SK-N-SH (cell line): ENCODE measurements at regions of chr1 and their contacts with region 1.

Region 1: GRCh38 chr1:211698161-211699026 is 23.0 kb upstream of the NEK2 start:
- DNase-seq: peak; percentile 86
- H3K4me3 ChIP-seq: no peak overlapping the region; a peak in 1 of 4 replicates
- H3K27ac ChIP-seq: no peak overlapping the region
- H3K4me1 ChIP-seq: no peaks in the 10 kb centered on the region
- H3K27me3 ChIP-seq: no peaks in the 10 kb centered on the region
- CTCF ChIP-seq: peak; percentile 95
- EP300 ChIP-seq: no peak
- RAD21 ChIP-seq: peak; percentile 89

Region 2: DNA sequence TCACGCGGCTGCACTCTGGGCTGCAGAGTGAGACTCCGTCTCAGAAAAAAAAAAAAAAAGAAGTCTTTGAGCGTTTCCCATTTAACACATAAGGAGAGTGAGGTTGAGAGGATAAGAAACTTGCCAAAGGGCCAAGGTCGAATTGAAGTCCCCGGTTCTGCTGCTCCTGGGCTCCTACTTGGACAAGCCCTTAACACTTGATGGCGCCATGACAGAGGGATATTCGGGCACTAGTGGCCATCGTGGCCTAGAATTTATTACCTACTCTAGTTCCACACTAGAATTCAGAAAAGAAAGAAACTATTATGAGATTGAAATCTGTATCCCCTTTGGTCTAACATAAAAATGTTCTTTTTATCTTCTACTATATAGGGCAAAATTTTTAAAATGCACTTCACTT is 42.7 kb after region 1 on chr1:
- CTCF ChIA-PET with region 1: interaction called, 11 read pairs
- POLR2A ChIA-PET with region 1: no interaction called
- DNase-seq: no peak
- H3K4me3 ChIP-seq: no peak overlapping the region
- H3K27ac ChIP-seq: no peak overlapping the region
- H3K4me1 ChIP-seq: peaks cover 10 to 12% of the 10 kb centered on the region in 2 experiments; a peak in 3 of 4 replicates
- H3K27me3 ChIP-seq: no peaks in the 10 kb centered on the region
- CTCF ChIP-seq: peak; percentile 14
- EP300 ChIP-seq: no peak
- RAD21 ChIP-seq: peak; percentile 11; the same call in 1 of the 2 replicates

Region 3: GRCh38 chr1:211830330-211831142 is 132.1 kb after region 1 on chr1 and contains the start of gene LPGAT1:
- CTCF ChIA-PET with region 1: interaction called, 42 read pairs
- POLR2A ChIA-PET with region 1: no interaction called
- DNase-seq: peak; percentile 93
- H3K4me3 ChIP-seq: peak within 1 kb of the TSS; percentile 64 to 79
- H3K27ac ChIP-seq: peak within 1 kb of the TSS; percentile 28 to 82; a peak in 3 of 4 replicates
- H3K4me1 ChIP-seq: peaks cover 8 to 24% of the 10 kb centered on the region in 2 experiments; a peak in 3 of 4 replicates
- H3K27me3 ChIP-seq: no peaks in the 10 kb centered on the region
- CTCF ChIP-seq: peak; percentile 58
- EP300 ChIP-seq: no peak
- RAD21 ChIP-seq: peak; percentile 47
- polyA plus RNA-seq, gene LPGAT1: 4.8 and 6.3 TPM in 2 replicates

Region 4: DNA sequence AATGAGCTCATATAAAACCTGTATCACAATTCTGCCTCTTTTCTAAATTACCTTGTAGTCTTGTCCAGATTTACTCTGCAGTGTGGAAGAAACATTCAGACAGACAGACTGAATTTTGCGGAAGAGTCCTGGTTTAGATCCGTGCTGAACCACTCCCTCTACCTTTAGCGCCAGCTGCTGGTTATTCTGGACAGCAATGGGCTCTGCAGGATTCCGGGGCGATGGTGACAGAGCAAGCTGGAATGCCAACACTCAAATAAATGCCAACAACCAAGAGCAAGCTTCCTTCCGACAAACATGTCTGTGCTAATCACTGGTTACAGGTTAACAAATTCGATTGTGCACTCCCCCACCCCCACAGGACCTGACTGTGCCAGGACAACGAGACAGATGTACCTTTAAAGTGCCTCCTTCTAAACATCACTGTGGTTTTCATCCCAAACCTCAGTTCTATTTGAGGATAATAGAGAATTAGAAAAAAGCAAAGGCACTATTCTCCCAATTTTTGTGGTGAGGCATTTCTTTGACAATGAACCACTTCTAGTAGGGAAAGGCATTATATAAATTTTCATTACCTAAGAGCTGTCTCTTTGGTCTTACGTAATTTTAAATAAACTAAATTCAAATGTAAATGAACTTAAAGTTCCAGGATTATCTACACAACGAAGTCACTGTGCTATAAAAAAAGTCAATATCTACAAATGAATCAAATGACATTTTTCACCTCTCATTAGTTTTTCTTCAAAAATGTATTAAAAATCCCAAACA is 246.5 kb after region 1 on chr1:
- CTCF ChIA-PET with region 1: interaction called, 14 read pairs
- POLR2A ChIA-PET with region 1: no interaction called
- DNase-seq: no peak
- H3K4me3 ChIP-seq: no peak overlapping the region
- H3K27ac ChIP-seq: no peak overlapping the region
- H3K4me1 ChIP-seq: no peaks in the 10 kb centered on the region
- H3K27me3 ChIP-seq: no peaks in the 10 kb centered on the region
- CTCF ChIP-seq: peak; percentile 45
- EP300 ChIP-seq: no peak
- RAD21 ChIP-seq: peak; percentile 42